Transverse colon (tissue), 4 donors: ENCODE measurements at regions of chr3 and their contacts with region 1.

Region 1: DNA sequence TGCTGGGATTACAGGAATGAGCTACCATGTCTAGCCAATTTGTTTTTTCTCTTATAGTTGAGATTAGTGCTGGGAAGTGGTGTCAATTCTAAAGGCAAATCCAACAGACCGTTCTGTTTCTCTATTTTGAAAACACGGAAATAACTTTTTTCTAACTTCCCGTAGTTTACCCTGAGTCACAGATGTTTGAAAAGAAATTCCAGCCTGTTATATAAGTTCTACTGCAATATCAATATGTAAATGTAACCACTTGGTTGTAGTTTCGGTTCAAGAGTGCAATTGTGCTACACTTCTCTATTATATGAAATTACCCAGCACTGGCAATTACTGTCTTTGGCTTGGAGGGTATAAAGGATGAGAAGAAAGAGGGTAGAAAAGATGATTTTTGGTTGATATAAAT is 22.3 kb upstream of the GNB4 start:
- DNase-seq: no peak
- H3K4me3 ChIP-seq: no peak overlapping the region
- H3K27ac ChIP-seq: peak overlapping the region in 1 of 4 donors; percentile 25
- H3K4me1 ChIP-seq: no peaks in the 10 kb centered on the region
- H3K27me3 ChIP-seq: no peaks in the 10 kb centered on the region
- CTCF ChIP-seq: no peak
- EP300 ChIP-seq: no peak
- POLR2A ChIP-seq: no peak

Region 2: GRCh38 chr3:179768080-179768479 is 294.5 kb after region 1 on chr3:
- in situ Hi-C with region 1: no loop called
- intact Hi-C with region 1: no loop called
- DNase-seq: peak; percentile 13
- H3K4me3 ChIP-seq: no peak overlapping the region
- H3K27ac ChIP-seq: no peak overlapping the region
- H3K4me1 ChIP-seq: peaks cover 0 to 15% (median 4%) of the 10 kb centered on the region in 4 donors
- H3K27me3 ChIP-seq: no peaks in the 10 kb centered on the region
- CTCF ChIP-seq: peak; percentile 15 to 45 (median 30)
- EP300 ChIP-seq: no peak
- POLR2A ChIP-seq: no peak

Region 3: DNA sequence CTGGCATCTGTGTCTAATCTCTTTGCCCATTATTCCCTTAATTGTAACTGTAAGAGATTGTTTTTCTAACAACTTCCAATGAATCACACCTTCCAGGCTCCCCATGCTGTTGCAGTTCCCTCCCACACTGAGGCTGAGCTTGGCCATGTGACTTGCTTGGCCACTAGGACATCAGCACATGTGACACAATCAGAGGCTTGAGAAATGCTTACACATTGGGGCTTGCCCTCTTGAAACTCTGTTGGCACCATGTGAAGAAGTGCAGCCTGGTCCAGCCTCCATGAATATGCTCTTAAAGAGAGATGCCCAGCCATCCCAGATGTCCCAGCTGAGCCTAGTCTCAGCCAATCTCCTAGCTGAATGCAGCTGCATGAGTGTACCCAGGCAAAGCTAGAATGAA is 1911.4 kb after region 1 on chr3:
- in situ Hi-C with region 1: no loop called
- intact Hi-C with region 1: loop called (anchors 10 kb)
- DNase-seq: no peak
- H3K4me3 ChIP-seq: no peak overlapping the region
- H3K27ac ChIP-seq: no peak overlapping the region
- H3K4me1 ChIP-seq: no peaks in the 10 kb centered on the region
- H3K27me3 ChIP-seq: no peaks in the 10 kb centered on the region
- CTCF ChIP-seq: no peak
- EP300 ChIP-seq: no peak
- POLR2A ChIP-seq: no peak